ENCODE measurements at regions of chr5 and their contacts with region 1.

Region 1: GRCh38 chr5:109409844-109410388 is at the start of gene PJA2:
- DNase-seq: peak; percentile 100
- H3K4me3 ChIP-seq: peak within 1 kb of the TSS; percentile 47 to 97 (median 88)
- H3K27ac ChIP-seq: peak within 1 kb of the TSS; percentile 97
- H3K4me1 ChIP-seq: peaks cover 18% of the 10 kb centered on the region
- H3K27me3 ChIP-seq: no peaks in the 10 kb centered on the region
- CTCF ChIP-seq: peak in 1 of 2 donors; percentile 22
- POLR2A ChIP-seq: peak; percentile 49
- total RNA-seq, gene PJA2: 61.8 and 64.9 TPM in 2 replicates

Region 2: GRCh38 chr5:108642167-108642906 is 767.6 kb before region 1 on chr5:
- CTCF ChIA-PET with region 1: interaction called, 3 read pairs
- POLR2A ChIA-PET with region 1: no interaction called
- dilution Hi-C with region 1: no loop called
- intact Hi-C with region 1: loop called (anchors 1 kb)
- DNase-seq: peak; percentile 82
- H3K4me3 ChIP-seq: no peak overlapping the region
- H3K27ac ChIP-seq: no peak overlapping the region
- H3K4me1 ChIP-seq: peaks cover 5% of the 10 kb centered on the region
- H3K27me3 ChIP-seq: no peaks in the 10 kb centered on the region
- CTCF ChIP-seq: peak; percentile 84 to 93
- POLR2A ChIP-seq: no peak

Region 3: DNA sequence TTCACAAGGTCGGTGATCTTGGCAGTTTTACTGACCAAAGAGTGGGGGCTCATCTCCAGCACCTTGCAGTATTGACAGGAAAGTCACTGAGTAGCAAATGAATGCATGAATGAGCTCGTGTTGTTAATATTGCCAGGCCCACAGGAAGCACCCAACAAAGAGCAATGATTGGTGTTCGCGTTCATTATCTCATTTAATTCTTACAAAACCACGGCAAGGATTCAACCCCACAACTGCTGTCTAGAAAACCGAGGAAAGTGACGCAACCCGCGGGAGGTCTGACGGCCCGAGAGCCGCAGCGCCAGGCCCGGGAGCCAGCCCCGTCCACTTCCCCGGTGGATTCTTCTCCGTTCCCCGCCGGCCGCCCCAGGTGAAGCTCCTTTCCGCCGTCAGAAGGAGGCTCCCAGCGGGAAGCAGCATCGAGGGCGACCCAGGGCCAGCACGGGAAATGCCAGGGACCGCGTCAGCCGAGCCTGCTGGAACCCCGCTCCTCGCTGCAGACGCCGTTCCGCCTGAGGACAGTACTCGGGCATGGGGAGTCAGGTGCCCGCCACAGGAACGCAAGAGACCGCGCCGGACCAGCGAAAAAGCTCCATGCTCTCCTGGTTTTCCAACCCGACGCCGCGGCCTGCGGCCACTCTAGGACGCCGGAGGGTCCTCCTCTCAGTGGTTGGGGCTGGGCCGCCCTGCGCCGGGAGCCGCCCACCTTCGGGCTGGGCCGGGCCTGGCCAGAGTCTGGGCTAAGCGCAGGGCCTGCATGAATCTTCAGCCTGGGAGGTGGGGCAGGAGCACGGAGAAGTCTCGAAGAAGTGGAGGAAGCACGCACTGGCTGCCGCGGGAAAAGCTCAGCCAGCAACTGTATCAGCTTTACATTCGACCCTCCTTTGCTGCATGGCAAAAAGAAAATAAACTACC is 682.0 kb before region 1 on chr5:
- CTCF ChIA-PET with region 1: no interaction called
- POLR2A ChIA-PET with region 1: no interaction called
- dilution Hi-C with region 1: no loop called
- intact Hi-C with region 1: loop called (anchors 1 kb)
- DNase-seq: peak; percentile 92
- H3K4me3 ChIP-seq: peak overlapping the region; percentile 54 to 84 (median 71)
- H3K27ac ChIP-seq: peak overlapping the region; percentile 68
- H3K4me1 ChIP-seq: peaks cover 23% of the 10 kb centered on the region
- H3K27me3 ChIP-seq: no peaks in the 10 kb centered on the region
- CTCF ChIP-seq: no peak
- POLR2A ChIP-seq: peak; percentile 92

Region 4: DNA sequence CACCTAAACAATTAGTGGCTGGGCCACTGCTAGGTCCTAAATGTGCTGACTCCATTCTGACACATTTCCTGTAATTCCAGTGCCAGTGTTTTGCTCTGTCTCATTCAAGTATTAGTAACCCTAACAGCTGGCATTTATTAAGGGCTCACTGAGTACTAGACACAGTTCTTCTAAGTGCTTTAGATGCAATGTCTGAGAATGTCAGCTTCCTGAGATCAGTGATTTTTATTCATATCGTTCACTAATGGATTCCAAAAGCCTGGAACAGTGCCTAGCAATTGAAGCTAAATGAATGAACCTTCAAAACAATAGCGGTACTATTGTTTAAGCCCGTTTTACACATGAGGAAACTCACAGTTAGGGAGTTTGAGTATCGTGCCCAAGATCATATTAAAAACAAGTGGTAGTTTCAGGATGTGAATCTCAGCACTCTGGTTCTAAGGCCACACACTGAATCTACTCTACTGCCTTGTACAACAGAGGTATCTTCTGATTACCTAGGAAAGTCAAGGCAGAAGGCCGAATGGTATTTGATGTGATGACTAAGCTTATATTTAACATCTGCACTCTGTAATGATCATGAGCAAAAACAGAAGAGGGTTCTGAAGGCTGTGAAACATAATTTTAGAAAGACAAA is 304.2 kb before region 1 on chr5:
- CTCF ChIA-PET with region 1: no interaction called
- POLR2A ChIA-PET with region 1: no interaction called
- dilution Hi-C with region 1: no loop called
- intact Hi-C with region 1: loop called (anchors 1 kb)
- DNase-seq: peak; percentile 97
- H3K4me3 ChIP-seq: peak overlapping the region in 1 of 3 experiments; percentile 16
- H3K27ac ChIP-seq: peak overlapping the region; percentile 89
- H3K4me1 ChIP-seq: peaks cover 21% of the 10 kb centered on the region
- H3K27me3 ChIP-seq: no peaks in the 10 kb centered on the region
- CTCF ChIP-seq: no peak
- POLR2A ChIP-seq: no peak

Region 5: DNA sequence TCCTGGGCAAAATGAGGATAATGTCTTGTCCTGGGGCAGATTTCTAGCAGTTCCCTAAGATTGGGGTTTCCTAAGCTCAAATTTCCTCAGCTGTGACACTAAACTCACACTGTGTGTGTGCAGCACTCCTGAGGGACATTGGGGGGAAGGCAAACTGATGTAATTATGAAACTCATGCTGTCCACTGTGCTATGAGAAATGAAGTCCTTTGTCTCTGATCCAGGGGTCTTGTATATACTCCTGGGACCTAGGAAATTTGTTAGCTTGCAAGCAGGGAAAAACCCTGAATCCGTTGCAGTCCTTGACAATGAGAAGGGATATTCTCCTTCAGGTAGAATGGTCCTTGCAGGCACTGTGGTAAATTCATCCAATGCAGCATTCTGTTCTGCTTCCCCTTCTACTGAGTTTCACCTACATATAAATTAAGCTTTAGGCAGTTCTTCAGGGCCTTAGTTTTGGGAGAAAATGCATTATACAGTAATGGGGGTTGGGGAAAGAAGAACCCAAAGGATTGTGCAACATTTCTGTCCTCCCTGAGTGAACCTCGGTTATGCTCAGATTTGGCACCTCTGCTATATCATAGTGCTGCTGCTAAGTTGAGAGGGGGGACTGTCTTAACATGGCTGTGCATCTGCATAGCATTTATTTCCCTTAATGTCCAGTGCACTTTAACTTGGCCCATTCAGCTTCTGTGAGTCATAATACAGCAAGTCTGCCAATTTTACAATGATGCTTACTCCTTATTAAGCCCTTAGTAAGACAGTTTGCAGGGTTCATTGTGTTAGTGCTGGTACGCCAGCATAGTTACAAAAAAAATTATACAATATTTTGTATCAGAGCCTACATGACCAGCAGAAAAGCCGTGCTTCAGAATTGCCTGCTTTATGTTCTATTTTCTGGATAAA is 80.3 kb before region 1 on chr5:
- CTCF ChIA-PET with region 1: no interaction called
- POLR2A ChIA-PET with region 1: no interaction called
- dilution Hi-C with region 1: no loop called
- intact Hi-C with region 1: loop called (anchors 5 kb)
- DNase-seq: peak; percentile 57
- H3K4me3 ChIP-seq: no peak overlapping the region
- H3K27ac ChIP-seq: no peak overlapping the region
- H3K4me1 ChIP-seq: peaks cover 7% of the 10 kb centered on the region
- H3K27me3 ChIP-seq: no peaks in the 10 kb centered on the region
- CTCF ChIP-seq: no peak
- POLR2A ChIP-seq: no peak

Region 6: DNA sequence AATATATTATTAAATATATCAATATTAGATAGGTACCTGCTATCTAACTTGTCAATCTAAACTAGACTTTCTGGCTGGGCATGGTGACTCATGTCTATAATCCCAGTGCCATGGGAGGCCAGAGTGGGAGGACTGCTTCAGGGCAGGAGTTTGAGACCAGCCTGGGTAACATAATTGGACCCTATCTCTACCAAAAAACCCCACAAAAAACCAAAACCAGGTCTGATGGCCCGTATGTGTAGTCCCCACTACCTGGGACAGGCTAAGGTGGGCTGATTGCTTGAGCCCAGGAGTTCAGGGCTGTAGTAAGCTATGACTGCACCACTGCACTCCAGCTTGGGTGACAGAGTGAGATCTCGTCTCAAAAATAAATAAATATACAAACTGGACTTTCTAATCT is 55.2 kb before region 1 on chr5:
- CTCF ChIA-PET with region 1: no interaction called
- POLR2A ChIA-PET with region 1: no interaction called
- dilution Hi-C with region 1: no loop called
- intact Hi-C with region 1: no loop called
- DNase-seq: no peak
- H3K4me3 ChIP-seq: no peak overlapping the region
- H3K27ac ChIP-seq: no peak overlapping the region
- H3K4me1 ChIP-seq: no peaks in the 10 kb centered on the region
- H3K27me3 ChIP-seq: no peaks in the 10 kb centered on the region
- CTCF ChIP-seq: no peak
- POLR2A ChIP-seq: no peak

Region 7: DNA sequence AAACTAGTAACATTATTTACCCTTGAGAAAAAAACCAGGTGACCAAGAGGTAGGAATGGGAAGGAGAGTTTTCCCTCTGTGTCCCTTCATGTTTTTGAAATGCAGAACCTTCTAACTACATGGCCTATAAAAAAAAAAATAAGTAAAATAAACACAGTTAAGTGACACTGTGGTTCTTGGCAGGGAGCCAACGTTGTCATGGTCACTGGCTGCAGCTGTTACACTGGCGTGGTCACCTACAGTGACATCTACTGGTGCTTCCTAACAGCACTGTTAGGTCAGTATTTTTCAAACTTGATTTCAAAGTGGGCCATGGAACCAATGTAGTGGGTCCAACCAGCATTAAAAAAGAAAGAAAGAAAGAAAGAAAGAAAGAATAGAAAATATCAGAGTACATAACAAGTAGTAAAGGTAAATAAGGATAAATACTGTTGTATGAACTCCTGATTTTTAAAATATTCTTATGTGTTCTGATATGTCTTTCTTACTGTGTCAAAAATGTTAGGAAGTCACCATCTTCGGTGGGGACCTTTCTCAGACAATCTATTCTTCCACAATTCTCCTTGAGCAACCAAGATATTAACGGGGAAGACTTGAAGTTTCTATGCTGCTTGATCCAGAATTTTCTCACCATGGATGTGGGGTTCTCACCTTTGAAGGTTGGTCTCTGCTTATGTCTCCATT is 59.0 kb after region 1 on chr5:
- CTCF ChIA-PET with region 1: interaction called, 3 read pairs
- POLR2A ChIA-PET with region 1: interaction called, 3 read pairs
- dilution Hi-C with region 1: no loop called
- intact Hi-C with region 1: loop called (anchors 1 kb)
- DNase-seq: peak; percentile 94
- H3K4me3 ChIP-seq: no peak overlapping the region
- H3K27ac ChIP-seq: no peak overlapping the region
- H3K4me1 ChIP-seq: peaks cover 2% of the 10 kb centered on the region
- H3K27me3 ChIP-seq: no peaks in the 10 kb centered on the region
- CTCF ChIP-seq: peak; percentile 69 to 73
- POLR2A ChIP-seq: no peak